Endothelial cell of umbilical vein (primary cell): ENCODE measurements at regions of chr11 and their contacts with region 1.

Region 1: GRCh38 chr11:60305906-60306619 is 21.0 kb upstream of the MS4A6E start:
- DNase-seq: peak; percentile 29
- H3K4me3 ChIP-seq: no peak overlapping the region
- H3K27ac ChIP-seq: peak overlapping the region; percentile 60
- H3K4me1 ChIP-seq: peaks cover 18% of the 10 kb centered on the region
- H3K27me3 ChIP-seq: no peaks in the 10 kb centered on the region
- CTCF ChIP-seq: no peak
- POLR2A ChIP-seq: no peak

Region 2: DNA sequence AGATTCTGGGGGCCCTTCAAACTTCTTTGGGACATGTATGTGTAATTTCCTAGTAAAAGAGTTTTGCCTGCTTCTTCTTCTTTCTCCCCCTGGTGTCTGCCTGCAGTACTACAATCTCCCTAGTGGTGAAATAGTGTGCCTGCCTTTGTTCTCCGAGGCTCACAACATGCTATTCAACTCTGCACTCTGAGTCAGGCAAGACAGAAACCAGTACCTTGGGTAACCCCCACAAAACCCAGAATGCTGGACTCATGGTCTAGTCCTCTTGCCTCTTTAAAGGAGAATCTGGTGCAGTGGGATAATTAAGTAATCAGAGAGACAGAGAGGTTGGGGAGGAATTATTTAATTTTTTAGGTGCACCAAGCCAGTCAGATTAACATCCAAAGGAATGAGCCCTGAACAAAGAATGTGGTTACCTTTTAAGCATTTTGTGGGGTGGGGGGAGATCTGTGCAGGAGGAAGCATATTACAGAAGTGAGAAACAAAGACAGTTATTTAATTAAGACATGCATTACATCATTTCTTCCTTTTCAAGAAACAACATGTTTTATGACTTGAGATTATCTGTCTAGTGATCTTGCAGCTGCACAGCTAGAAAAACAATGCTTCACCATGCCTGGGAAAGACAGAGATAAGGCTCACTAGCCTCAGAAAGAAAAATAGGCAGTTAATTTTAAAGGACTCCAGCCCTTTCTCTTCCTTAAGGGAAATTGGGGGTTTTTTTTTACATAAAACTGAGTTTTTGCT is 112.2 kb before region 1 on chr11:
- CTCF ChIA-PET with region 1: no interaction called
- POLR2A ChIA-PET with region 1: no interaction called
- dilution Hi-C with region 1: no loop called
- intact Hi-C with region 1: no loop called
- DNase-seq: peak; percentile 98
- H3K4me3 ChIP-seq: no peak overlapping the region
- H3K27ac ChIP-seq: peak overlapping the region; percentile 92
- H3K4me1 ChIP-seq: peaks cover 37% of the 10 kb centered on the region
- H3K27me3 ChIP-seq: no peaks in the 10 kb centered on the region
- CTCF ChIP-seq: peak; percentile 97
- POLR2A ChIP-seq: peak; percentile 21

Region 3: GRCh38 chr11:61152816-61153592 is 846.9 kb after region 1 on chr11:
- CTCF ChIA-PET with region 1: no interaction called
- POLR2A ChIA-PET with region 1: no interaction called
- dilution Hi-C with region 1: no loop called
- intact Hi-C with region 1: loop called (anchors 5 kb)
- DNase-seq: peak; percentile 32
- H3K4me3 ChIP-seq: no peak overlapping the region
- H3K27ac ChIP-seq: peak overlapping the region; percentile 40
- H3K4me1 ChIP-seq: peaks cover 21% of the 10 kb centered on the region
- H3K27me3 ChIP-seq: no peaks in the 10 kb centered on the region
- CTCF ChIP-seq: no peak
- POLR2A ChIP-seq: no peak